Activated CD8-positive, alpha-beta T cell treated with anti-CD3 and anti-CD28 coated beads, Interleukin-2, amount 10 ng/mL, durations not matched to agents 7 days and 5 days (primary cell): ENCODE measurements at regions of chr16 and their contacts with region 1.

Region 1: GRCh38 chr16:6993559-6993958 is 339.1 kb upstream of the RBFOX1 start:
- DNase-seq: no peak
- ATAC-seq: no peak
- H3K4me3 Mint-ChIP-seq: no peak overlapping the region
- H3K27ac Mint-ChIP-seq: no peak overlapping the region
- H3K4me1 Mint-ChIP-seq: no peaks in the 10 kb centered on the region
- H3K27me3 Mint-ChIP-seq: no peaks in the 10 kb centered on the region

Region 2: GRCh38 chr16:5234295-5235050 is 1759.1 kb before region 1 on chr16:
- CTCF ChIA-PET with region 1: no interaction called
- POLR2A ChIA-PET with region 1: interaction called, 10 read pairs
- DNase-seq: no peak
- ATAC-seq: no peak
- H3K4me3 Mint-ChIP-seq: no peak overlapping the region
- H3K27ac Mint-ChIP-seq: no peak overlapping the region
- H3K4me1 Mint-ChIP-seq: no peaks in the 10 kb centered on the region
- H3K27me3 Mint-ChIP-seq: peaks cover 7% of the 10 kb centered on the region

Region 3: GRCh38 chr16:6926762-6927161 is 66.8 kb before region 1 on chr16:
- CTCF ChIA-PET with region 1: no interaction called
- POLR2A ChIA-PET with region 1: no interaction called
- DNase-seq: no peak
- ATAC-seq: no peak
- H3K4me3 Mint-ChIP-seq: no peak overlapping the region
- H3K27ac Mint-ChIP-seq: no peak overlapping the region
- H3K4me1 Mint-ChIP-seq: no peaks in the 10 kb centered on the region
- H3K27me3 Mint-ChIP-seq: no peaks in the 10 kb centered on the region